ENCODE measurements at regions of chr1 and their contacts with region 1.

Region 1: DNA sequence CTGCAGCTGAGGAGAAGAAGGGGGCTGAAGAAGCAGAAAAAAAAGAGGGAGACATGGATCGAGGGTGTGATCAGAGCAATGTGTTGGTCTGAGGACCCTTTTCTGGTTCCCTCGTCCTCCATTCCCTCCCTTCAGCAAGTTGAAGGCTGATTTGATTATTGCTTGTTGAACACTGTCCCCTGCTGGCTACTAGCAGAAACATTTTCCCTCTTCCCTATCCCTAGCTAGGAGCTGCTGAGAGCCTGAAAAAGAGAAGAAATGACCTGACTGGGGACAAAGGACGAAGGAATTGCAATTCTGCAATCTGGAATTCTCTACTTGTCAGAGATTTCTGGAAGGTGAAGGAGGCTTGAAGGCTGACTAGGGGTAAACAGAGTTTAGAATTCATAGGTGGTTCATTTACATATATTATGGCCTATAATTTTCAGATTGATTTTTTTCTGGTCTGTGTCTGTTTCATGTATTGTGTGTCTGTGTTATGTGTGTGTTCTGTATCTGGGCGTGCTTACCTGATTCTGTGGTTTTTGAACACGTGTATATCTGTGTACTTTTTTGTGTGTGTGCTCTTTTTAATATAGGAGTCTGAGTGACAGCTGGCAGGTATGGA is 9.8 kb downstream of the NHLH1 start:
- DNase-seq: peak; percentile 48
- ATAC-seq: peak; percentile 89
- H3K4me3 Mint-ChIP-seq: no peak overlapping the region
- H3K27ac Mint-ChIP-seq: no peak overlapping the region
- H3K4me1 Mint-ChIP-seq: peaks cover 13% of the 10 kb centered on the region
- H3K27me3 Mint-ChIP-seq: no peaks in the 10 kb centered on the region

Region 2: GRCh38 chr1:159911326-159912070 is 465.1 kb before region 1 on chr1:
- CTCF ChIA-PET with region 1: no interaction called
- POLR2A ChIA-PET with region 1: no interaction called
- intact Hi-C with region 1: no loop called
- DNase-seq: peak; percentile 49
- ATAC-seq: peak; percentile 31
- H3K4me3 Mint-ChIP-seq: no peak overlapping the region
- H3K27ac Mint-ChIP-seq: peak overlapping the region; percentile 92
- H3K4me1 Mint-ChIP-seq: peaks cover 46% of the 10 kb centered on the region
- H3K27me3 Mint-ChIP-seq: no peaks in the 10 kb centered on the region

Region 3: DNA sequence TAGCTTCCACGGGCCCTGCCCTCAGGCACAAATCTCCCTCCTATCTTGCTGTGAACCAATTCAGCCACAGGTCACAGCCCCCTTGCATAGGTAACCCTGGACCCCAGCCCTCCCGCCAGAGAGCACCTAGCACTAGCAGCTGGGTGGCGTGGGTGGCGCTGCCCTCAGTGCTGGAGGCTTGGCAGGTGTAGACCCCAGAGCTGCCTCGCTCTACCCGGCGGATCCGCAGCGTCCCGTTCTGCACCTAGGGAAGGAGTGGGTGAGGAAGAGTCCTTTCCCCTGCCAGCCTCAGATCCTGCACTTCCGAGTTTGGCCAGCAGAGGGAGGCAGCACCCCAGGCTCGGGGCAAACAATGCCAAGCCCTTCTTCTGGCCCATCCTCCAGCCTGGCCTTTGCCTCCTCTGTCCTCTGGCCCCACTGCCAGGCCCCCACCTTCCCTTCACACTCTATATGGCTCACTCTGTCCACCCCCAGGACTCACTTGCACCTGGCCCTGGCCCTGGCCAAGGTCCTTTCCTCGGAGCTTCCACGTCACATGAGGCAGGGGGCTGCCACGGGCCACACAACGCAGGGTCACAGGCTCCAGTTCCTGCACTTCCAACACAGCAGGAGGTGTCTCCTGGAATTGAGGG is 440.2 kb before region 1 on chr1:
- CTCF ChIA-PET with region 1: no interaction called
- POLR2A ChIA-PET with region 1: no interaction called
- intact Hi-C with region 1: loop called in 1 of 2 experiments (anchors 5 kb)
- DNase-seq: peak; percentile 90
- ATAC-seq: peak; percentile 89
- H3K4me3 Mint-ChIP-seq: no peak overlapping the region
- H3K27ac Mint-ChIP-seq: no peak overlapping the region
- H3K4me1 Mint-ChIP-seq: peaks cover 5% of the 10 kb centered on the region
- H3K27me3 Mint-ChIP-seq: peaks cover 4% of the 10 kb centered on the region

Region 4: DNA sequence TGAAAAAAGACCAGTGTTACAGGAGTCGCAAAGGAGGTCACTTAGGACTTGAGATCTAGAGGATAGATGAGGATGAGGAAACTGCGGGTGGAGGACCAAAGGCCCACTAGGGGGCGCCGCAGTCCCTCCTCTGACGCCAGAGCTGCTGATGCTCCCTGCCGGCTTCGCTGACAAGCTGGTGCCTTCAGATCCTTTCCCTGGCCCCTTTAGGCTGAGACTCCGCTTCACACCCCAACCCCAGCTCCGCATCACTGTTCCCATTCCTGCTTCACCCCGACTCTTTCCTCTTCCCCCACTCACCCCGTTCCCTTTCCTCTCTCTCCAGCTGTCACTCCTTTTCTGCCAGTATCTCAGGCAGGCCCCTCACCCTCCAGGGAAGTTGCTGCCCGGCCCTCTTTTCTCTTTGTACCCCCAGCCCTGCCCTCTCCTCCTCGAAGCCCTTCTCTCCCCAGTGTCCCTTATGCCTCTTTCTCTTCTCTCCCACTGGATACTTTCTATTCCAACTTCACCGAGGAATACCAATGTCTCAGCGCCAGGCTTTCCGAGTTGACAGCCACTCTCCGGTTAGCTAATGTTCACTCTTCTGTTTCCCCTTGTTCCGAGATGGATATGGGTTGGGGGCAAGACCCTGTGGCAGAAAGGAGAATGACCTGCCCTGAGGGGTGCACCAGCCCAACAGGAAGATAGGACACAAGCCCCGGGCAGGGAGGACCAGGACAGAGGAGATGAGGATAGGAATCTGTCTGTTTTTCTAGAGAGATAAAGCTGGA is 290.8 kb before region 1 on chr1:
- CTCF ChIA-PET with region 1: interaction called, 4 read pairs
- POLR2A ChIA-PET with region 1: no interaction called
- intact Hi-C with region 1: loop called in 1 of 2 experiments (anchors 1 kb)
- DNase-seq: peak; percentile 91
- ATAC-seq: peak; percentile 76
- H3K4me3 Mint-ChIP-seq: no peak overlapping the region
- H3K27ac Mint-ChIP-seq: no peak overlapping the region
- H3K4me1 Mint-ChIP-seq: peaks cover 12% of the 10 kb centered on the region
- H3K27me3 Mint-ChIP-seq: peaks cover 20% of the 10 kb centered on the region

Region 5: GRCh38 chr1:160193091-160193819 is 183.4 kb before region 1 on chr1:
- CTCF ChIA-PET with region 1: interaction called, 11 read pairs
- POLR2A ChIA-PET with region 1: no interaction called
- intact Hi-C with region 1: loop called (anchors 1 kb)
- DNase-seq: peak; percentile 90
- ATAC-seq: peak; percentile 89
- H3K4me3 Mint-ChIP-seq: no peak overlapping the region
- H3K27ac Mint-ChIP-seq: no peak overlapping the region
- H3K4me1 Mint-ChIP-seq: no peaks in the 10 kb centered on the region
- H3K27me3 Mint-ChIP-seq: no peaks in the 10 kb centered on the region

Region 6: GRCh38 chr1:160315359-160315758 is 61.3 kb before region 1 on chr1:
- CTCF ChIA-PET with region 1: no interaction called
- POLR2A ChIA-PET with region 1: no interaction called
- intact Hi-C with region 1: no loop called
- DNase-seq: no peak
- ATAC-seq: no peak
- H3K4me3 Mint-ChIP-seq: no peak overlapping the region
- H3K27ac Mint-ChIP-seq: peak overlapping the region; percentile 45
- H3K4me1 Mint-ChIP-seq: peaks cover 17% of the 10 kb centered on the region
- H3K27me3 Mint-ChIP-seq: no peaks in the 10 kb centered on the region

Region 7: GRCh38 chr1:160354388-160354985 is 22.1 kb before region 1 on chr1:
- CTCF ChIA-PET with region 1: interaction called, 38 read pairs
- POLR2A ChIA-PET with region 1: interaction called, 4 read pairs
- intact Hi-C with region 1: no loop called
- DNase-seq: peak; percentile 47
- ATAC-seq: peak; percentile 74
- H3K4me3 Mint-ChIP-seq: no peak overlapping the region
- H3K27ac Mint-ChIP-seq: no peak overlapping the region
- H3K4me1 Mint-ChIP-seq: no peaks in the 10 kb centered on the region
- H3K27me3 Mint-ChIP-seq: no peaks in the 10 kb centered on the region

Region 8: DNA sequence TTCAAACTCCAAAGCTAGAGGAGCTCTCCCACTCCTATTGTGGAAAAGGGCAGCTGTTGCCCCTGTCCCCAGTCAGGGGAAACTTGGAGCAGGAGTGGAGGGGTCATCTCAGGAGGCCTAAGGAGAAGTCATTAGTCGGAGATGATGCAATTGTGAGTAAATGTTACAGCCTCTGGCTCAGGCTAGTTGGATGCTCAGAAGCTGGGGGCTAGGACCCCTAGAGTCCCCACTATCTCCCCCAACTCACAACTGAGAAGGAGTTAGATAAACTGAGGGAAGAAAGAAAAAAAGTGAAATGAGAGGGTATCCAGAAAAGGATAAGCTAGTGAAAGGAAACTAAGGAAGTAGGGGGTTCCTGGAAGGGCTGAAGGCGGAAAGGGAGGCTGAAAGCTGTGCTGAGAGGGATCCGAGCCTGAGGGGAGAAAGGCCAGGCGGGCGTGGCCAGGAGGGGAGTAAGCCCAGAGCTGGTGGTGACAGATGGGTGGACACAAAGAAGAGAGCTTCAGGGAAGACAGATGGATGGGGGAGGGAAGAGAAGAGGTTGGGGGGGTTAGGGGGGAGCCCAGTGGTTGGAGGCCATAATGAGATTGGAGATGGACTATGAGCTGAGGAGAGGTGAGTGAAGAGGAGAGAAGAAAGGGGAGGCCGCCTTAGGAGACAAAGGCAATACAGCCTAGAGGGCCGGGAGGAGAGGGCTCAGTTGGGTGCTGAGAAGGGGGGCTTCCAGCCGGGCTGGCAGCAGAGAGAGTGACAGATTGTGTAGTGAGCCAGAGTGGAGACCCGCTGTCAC is 14.3 kb before region 1 on chr1:
- CTCF ChIA-PET with region 1: interaction called, 12 read pairs
- POLR2A ChIA-PET with region 1: no interaction called
- intact Hi-C with region 1: no loop called
- DNase-seq: no peak
- ATAC-seq: no peak
- H3K4me3 Mint-ChIP-seq: no peak overlapping the region
- H3K27ac Mint-ChIP-seq: peak overlapping the region; percentile 71
- H3K4me1 Mint-ChIP-seq: no peaks in the 10 kb centered on the region
- H3K27me3 Mint-ChIP-seq: no peaks in the 10 kb centered on the region

Region 9: GRCh38 chr1:160522622-160523345 is 146.2 kb after region 1 on chr1 and contains the start of gene SLAMF6:
- CTCF ChIA-PET with region 1: no interaction called
- POLR2A ChIA-PET with region 1: no interaction called
- intact Hi-C with region 1: no loop called
- DNase-seq: peak; percentile 73
- ATAC-seq: peak; percentile 62
- H3K4me3 Mint-ChIP-seq: peak within 1 kb of the TSS; percentile 97
- H3K27ac Mint-ChIP-seq: peak within 1 kb of the TSS; percentile 98
- H3K4me1 Mint-ChIP-seq: peaks cover 66% of the 10 kb centered on the region
- H3K27me3 Mint-ChIP-seq: no peaks in the 10 kb centered on the region
- total RNA-seq, gene SLAMF6: 45.9 to 55.0 TPM

Region 10: GRCh38 chr1:160629286-160630210 is 252.9 kb after region 1 on chr1:
- CTCF ChIA-PET with region 1: no interaction called
- POLR2A ChIA-PET with region 1: no interaction called
- intact Hi-C with region 1: no loop called
- DNase-seq: peak; percentile 83
- ATAC-seq: peak; percentile 22
- H3K4me3 Mint-ChIP-seq: peak overlapping the region; percentile 65
- H3K27ac Mint-ChIP-seq: peak overlapping the region; percentile 99
- H3K4me1 Mint-ChIP-seq: peaks cover 97% of the 10 kb centered on the region
- H3K27me3 Mint-ChIP-seq: no peaks in the 10 kb centered on the region